SK-N-SH (cell line): ENCODE measurements at regions of chr19 and their contacts with region 1.

Region 1: GRCh38 chr19:35931161-35931873 is 4.9 kb upstream of the LRFN3 start:
- DNase-seq: peak; percentile 98
- H3K4me3 ChIP-seq: peak overlapping the region; percentile 37 to 57
- H3K27ac ChIP-seq: peak overlapping the region; percentile 40 to 91; a peak in 3 of 4 replicates
- H3K4me1 ChIP-seq: peaks cover 3 to 7% of the 10 kb centered on the region in 2 experiments; a peak in 3 of 4 replicates
- H3K27me3 ChIP-seq: no peaks in the 10 kb centered on the region
- CTCF ChIP-seq: peak; percentile 89
- EP300 ChIP-seq: no peak
- RAD21 ChIP-seq: peak; percentile 99

Region 2: GRCh38 chr19:35882114-35882832 is 49.0 kb before region 1 on chr19:
- CTCF ChIA-PET with region 1: interaction called, 57 read pairs
- POLR2A ChIA-PET with region 1: no interaction called
- DNase-seq: peak; percentile 79
- H3K4me3 ChIP-seq: no peak overlapping the region
- H3K27ac ChIP-seq: no peak overlapping the region
- H3K4me1 ChIP-seq: no peaks in the 10 kb centered on the region; a peak in 1 of 4 replicates
- H3K27me3 ChIP-seq: no peaks in the 10 kb centered on the region
- CTCF ChIP-seq: peak; percentile 61
- EP300 ChIP-seq: no peak
- RAD21 ChIP-seq: peak; percentile 87

Region 3: GRCh38 chr19:35898499-35898809 is 32.9 kb before region 1 on chr19:
- CTCF ChIA-PET with region 1: interaction called, 11 read pairs
- POLR2A ChIA-PET with region 1: interaction called, 5 read pairs
- DNase-seq: no peak
- H3K4me3 ChIP-seq: peak overlapping the region; percentile 69 to 100
- H3K27ac ChIP-seq: no peak overlapping the region; a peak in 1 of 4 replicates
- H3K4me1 ChIP-seq: peaks cover 8 to 22% of the 10 kb centered on the region in 2 experiments; a peak in 3 of 4 replicates
- H3K27me3 ChIP-seq: no peaks in the 10 kb centered on the region
- CTCF ChIP-seq: no peak
- EP300 ChIP-seq: no peak
- RAD21 ChIP-seq: no peak

Region 4: GRCh38 chr19:35921012-35921411 is 10.3 kb before region 1 on chr19:
- CTCF ChIA-PET with region 1: no interaction called
- POLR2A ChIA-PET with region 1: no interaction called
- DNase-seq: no peak
- H3K4me3 ChIP-seq: no peak overlapping the region
- H3K27ac ChIP-seq: no peak overlapping the region
- H3K4me1 ChIP-seq: no peaks in the 10 kb centered on the region
- H3K27me3 ChIP-seq: peaks cover 10% of the 10 kb centered on the region; the same call in 1 of the 2 replicates
- CTCF ChIP-seq: no peak
- EP300 ChIP-seq: no peak
- RAD21 ChIP-seq: no peak